ENCODE measurements at regions of chr16 and their contacts with region 1.

Region 1: DNA sequence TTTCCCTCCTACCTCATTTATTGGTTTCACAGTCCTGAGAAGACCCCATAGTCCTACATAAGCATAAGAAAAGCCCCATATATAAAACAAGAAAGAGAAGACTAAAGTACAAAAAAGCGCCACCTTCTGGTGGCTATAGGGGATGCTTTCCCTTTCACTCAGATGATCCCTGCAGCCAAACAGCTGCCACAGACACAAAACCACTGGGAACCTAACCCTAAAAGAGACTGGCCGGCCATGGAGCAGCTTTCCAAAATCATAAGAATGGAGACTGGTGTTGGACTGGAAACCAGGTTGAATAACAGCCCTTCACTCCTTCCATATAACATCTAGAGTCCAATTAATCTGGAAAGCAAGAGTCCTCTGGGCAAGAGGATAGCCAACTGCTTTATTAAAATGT is 11.4 kb downstream of the DYNC1LI2 start:
- H3K4me3 ChIP-seq: no peak overlapping the region
- H3K27ac ChIP-seq: peak overlapping the region; percentile 38; the same call in 1 of the 2 replicates
- H3K4me1 ChIP-seq: peaks cover 14% of the 10 kb centered on the region
- CTCF ChIP-seq: 0 out of 2 replicates have a peak, but pooled peaks have one; percentile 15

Region 2: DNA sequence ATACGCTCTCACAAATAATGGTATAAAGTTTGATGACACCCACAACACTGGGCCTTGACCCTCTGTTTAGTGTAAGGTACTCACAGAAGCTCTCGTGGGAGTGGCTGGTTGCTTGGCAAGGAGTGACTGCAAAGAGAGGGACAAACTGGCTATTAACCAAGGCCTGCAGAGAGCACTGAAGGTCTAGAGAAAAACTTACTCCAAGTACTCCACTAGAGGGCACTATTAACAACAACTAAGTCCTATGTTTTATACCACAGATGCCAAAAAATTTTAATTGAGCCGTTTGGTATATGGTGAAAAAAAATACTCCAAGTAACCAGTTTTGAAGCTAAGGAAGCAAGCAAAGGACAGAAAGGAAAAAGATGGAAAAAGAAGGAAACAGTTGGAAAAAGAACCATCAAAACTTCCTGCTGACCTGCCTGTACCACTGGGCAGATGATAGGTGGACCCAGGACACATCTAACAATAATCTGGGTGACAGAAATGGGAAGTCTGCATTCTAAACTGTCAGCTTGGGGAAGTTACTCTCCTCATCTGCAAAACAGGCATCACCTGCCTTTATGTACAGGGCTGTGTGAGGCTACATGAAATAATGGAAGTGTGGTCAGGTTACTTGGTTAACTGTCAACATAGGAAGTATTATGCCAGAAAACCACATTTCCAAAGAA is 11.8 kb before region 1 on chr16:
- CTCF ChIA-PET with region 1: interaction called, 88 read pairs
- POLR2A ChIA-PET with region 1: interaction called, 4 read pairs
- H3K4me3 ChIP-seq: no peak overlapping the region
- H3K27ac ChIP-seq: no peak overlapping the region
- H3K4me1 ChIP-seq: no peaks in the 10 kb centered on the region
- CTCF ChIP-seq: peak; percentile 34

Region 3: DNA sequence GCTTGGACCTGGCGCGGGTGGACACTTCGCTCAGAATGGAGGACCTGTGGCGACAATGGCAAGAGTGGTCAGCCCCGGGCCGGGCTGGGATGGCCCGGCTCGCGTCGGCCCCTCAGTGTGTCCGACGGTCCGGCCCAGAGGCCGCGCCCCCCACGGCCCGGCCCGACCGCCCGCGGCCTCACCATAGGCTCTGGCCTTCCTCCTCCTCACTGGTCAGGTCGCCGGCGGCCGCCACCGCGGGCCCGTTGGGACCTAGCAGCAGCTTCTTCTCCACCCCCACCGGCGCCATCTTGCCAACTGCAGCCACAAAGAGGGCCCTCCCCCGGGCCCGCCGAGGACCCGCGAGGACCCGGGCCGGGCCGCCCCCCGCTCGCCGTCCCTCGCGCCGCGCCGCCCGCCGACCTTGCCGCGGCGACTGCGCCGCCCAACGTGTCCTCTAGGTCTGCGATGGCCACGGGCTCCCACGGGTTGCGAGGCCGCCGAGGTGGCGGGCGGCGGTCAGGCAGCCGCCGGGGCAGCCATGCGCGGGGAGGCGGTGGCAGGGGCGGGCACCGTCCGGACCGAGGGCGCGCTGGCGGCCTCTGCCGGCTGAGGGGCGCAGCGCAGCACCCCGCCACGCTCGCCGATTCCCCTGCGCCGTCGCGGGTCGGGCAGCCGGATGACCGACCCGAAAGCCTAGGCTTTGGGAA is 11.4 kb after region 1 on chr16 and contains the start of gene DYNC1LI2:
- CTCF ChIA-PET with region 1: interaction called, 40 read pairs
- POLR2A ChIA-PET with region 1: interaction called, 9 read pairs
- H3K4me3 ChIP-seq: peak within 1 kb of the TSS; percentile 87
- H3K27ac ChIP-seq: peak within 1 kb of the TSS; percentile 98
- H3K4me1 ChIP-seq: peaks cover 6% of the 10 kb centered on the region
- CTCF ChIP-seq: 0 out of 2 replicates have a peak, but pooled peaks have one; percentile 32

Region 4: DNA sequence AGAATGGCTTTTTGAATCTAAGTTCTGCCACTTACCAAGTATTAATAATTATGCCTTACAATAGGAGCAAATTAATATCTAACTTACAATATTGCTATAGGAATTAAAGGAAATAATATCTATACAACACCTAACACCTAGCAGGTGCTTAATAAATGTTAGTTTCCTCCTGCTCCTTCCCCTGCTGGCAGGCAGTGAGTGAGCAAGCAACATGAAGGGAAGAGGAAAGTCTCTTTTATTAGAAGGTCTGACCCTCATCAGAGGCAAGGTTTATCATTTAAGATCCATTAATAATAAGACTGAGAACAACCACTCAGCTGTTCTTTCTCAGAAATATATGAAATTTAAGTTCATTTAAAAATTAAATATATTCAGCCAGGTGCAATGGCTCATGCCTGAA is 18.1 kb after region 1 on chr16:
- CTCF ChIA-PET with region 1: interaction called, 15 read pairs
- POLR2A ChIA-PET with region 1: no interaction called
- H3K4me3 ChIP-seq: no peak overlapping the region
- H3K27ac ChIP-seq: no peak overlapping the region
- H3K4me1 ChIP-seq: no peaks in the 10 kb centered on the region
- CTCF ChIP-seq: no peak

Measured in HEK293 (cell line).